Activated naive CD4-positive, alpha-beta T cell treated with anti-CD3 and anti-CD28 coated beads for 36 hours (primary cell): ENCODE measurements at regions of chr5 and their contacts with region 1.

Region 1: DNA sequence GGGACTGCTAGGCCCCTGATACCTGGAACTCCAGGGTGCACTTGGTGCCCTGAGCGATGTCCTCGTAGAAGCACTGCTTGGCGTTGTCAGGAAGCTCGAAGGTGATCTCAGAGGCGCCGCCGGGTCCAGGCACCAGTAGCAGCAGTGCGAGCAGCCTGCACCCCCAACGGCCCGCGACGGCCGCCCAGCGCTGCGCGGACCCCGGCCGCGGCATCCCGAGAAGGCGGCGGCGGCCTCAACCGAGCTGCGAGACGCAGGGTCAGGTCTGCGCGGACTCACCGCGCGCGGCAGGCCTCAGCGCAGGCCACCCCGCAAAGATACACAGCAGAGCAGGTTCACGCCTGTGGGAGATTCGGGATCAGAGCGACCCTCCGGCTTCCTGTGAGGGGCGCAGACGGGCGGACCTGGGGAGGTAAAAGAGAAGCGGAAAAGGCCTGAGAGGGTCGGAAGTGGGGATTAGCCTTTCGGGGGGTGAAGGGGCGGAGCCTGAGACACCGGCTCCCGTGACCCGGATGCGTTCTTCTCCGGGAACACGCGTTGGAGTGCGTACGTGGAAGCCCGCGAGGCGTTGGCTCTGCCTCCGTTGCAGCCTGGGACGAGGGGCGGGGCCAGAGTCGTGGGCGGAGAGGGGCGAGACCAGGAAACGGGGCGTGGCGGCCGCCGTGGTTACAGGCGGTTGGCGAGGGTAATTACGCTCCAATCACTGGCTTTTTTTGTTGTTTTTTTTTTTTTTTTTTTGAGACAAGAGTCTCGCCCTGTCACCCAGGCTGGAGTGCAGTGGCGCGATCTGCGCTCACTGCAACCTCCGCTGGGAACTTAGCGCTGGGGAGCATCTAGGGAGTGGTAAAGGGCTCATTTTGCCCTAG is at the start of gene TMED7:
- DNase-seq: peak; percentile 100
- H3K4me3 Mint-ChIP-seq: no peak within 1 kb of the TSS
- H3K27ac Mint-ChIP-seq: peak within 1 kb of the TSS; percentile 89
- H3K4me1 Mint-ChIP-seq: peaks cover 21% of the 10 kb centered on the region
- H3K27me3 Mint-ChIP-seq: no peaks in the 10 kb centered on the region
- total RNA-seq, gene TMED7: 34.6 to 35.4 TPM

Region 2: DNA sequence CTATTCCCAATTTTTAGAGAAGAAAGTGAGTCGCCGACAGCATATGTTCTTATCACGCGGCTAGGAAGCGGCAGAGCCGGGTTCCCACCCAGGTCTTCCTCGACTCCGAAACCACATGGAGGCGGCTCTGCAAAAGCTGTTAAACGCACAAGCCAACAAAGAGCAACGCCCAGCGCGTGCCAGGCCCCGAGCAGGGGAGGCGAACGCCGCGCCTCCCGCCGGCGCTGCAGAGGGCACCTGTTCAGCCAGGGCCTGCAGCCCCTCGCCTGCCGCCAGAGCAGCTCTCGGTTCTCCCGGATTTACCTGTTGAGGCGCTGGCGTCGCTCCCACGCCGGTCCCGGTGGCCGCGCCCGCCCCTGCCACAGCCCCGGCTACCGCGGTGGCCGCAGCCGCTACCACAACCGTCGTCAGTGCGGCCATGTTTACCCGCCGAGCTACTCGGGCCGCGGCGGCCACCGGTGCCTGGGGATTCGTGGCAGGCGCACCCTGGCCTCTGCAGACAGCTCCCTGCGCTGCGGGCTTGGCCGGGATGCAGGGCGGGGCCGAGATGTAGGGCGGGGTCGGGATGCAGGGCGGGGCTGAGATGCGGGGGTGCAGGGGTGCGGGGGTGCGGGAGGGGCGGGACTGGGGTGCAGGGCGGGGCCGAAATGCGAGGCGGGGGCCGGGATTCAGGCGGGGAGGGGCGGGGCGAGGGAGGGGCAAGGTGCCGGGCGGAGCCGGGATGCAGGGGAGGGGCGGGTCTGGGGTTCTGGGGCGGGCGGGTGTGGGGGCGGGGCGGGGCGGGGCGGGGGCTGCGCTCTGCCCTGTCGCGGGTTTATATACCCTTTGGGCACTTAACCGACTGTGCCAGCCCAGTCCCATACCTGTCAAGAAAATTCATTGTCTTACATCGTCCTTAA is 329.4 kb before region 1 on chr5 and contains the start of gene CCDC112:
- CTCF ChIA-PET with region 1: no interaction called
- intact Hi-C with region 1: loop called (anchors 1 kb)
- DNase-seq: peak; percentile 85
- H3K4me3 Mint-ChIP-seq: peak within 1 kb of the TSS; percentile 80
- H3K27ac Mint-ChIP-seq: no peak within 1 kb of the TSS
- H3K4me1 Mint-ChIP-seq: peaks cover 4% of the 10 kb centered on the region
- H3K27me3 Mint-ChIP-seq: peaks cover 3% of the 10 kb centered on the region
- total RNA-seq, gene CCDC112: 1.9 to 2.1 TPM

Region 3: DNA sequence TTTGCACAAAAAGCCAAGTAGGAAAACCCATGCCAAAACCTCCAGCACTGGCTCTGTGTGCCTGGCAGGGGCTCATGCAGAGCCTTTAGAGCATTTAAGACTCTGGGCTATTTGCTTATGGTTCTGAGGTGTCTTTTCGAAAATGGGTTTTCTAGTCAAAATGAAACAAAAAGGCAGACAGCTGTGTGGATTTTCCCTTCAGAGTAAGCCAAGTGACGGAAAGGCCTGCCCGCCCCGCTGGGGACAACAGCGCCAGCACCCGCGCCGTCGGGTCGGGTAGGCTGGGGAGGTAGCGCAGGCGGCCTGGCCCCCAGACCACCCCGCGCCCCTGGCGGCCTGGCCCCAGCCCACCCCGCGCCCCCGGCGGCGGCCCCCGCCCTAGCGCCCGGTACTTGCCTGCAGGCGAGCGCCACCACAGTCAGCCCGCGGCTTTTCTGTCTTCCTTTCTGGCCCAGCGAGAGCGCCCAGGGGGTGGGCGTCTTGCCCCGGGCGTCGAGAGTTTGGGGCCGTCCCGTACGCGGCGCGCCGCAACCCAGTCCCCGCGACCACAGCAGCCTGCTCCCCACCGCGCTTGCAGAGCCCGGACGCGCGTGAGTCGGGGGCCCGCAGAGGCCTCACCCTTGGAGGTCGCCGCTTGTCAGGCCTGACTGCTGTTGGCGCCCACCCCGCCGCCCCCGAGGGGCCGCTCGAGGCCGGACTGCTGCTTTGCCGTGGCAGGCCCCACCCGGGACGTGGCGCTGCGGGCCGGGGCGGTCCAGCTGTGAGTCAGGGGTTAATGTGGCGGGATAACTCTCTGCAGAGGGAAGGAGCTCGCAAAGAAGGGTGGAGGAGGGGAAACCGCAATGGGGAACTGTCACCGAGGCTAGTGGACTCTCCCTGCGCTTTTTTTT is 23.9 kb before region 1 on chr5 and contains the start of gene TICAM2:
- CTCF ChIA-PET with region 1: interaction called, 5 read pairs
- intact Hi-C with region 1: loop called (anchors 1 kb)
- DNase-seq: peak; percentile 76
- H3K4me3 Mint-ChIP-seq: peak within 1 kb of the TSS; percentile 59
- H3K27ac Mint-ChIP-seq: no peak within 1 kb of the TSS
- H3K4me1 Mint-ChIP-seq: peaks cover 39% of the 10 kb centered on the region
- H3K27me3 Mint-ChIP-seq: no peaks in the 10 kb centered on the region
- total RNA-seq, gene TICAM2: 0.72 to 0.91 TPM

Region 4: GRCh38 chr5:115962503-115963402 is 336.9 kb after region 1 on chr5:
- CTCF ChIA-PET with region 1: no interaction called
- intact Hi-C with region 1: loop called (anchors 5 kb)
- DNase-seq: no peak
- H3K4me3 Mint-ChIP-seq: peak overlapping the region; percentile 21
- H3K27ac Mint-ChIP-seq: no peak overlapping the region
- H3K4me1 Mint-ChIP-seq: peaks cover 9% of the 10 kb centered on the region
- H3K27me3 Mint-ChIP-seq: peaks cover 57% of the 10 kb centered on the region

Region 5: GRCh38 chr5:116084871-116085715 is 459.3 kb after region 1 on chr5 and contains the start of gene COMMD10:
- CTCF ChIA-PET with region 1: no interaction called
- intact Hi-C with region 1: loop called (anchors 1 kb)
- DNase-seq: peak; percentile 81
- H3K4me3 Mint-ChIP-seq: peak within 1 kb of the TSS; percentile 91
- H3K27ac Mint-ChIP-seq: peak within 1 kb of the TSS; percentile 97
- H3K4me1 Mint-ChIP-seq: peaks cover 45% of the 10 kb centered on the region
- H3K27me3 Mint-ChIP-seq: no peaks in the 10 kb centered on the region
- total RNA-seq, gene COMMD10: 30.0 to 30.9 TPM